ENCODE measurements at regions of chr3 and their contacts with region 1.

Region 1: GRCh38 chr3:14921078-14921616 is 26.2 kb upstream of the NR2C2 start:
- DNase-seq: peak; percentile 72 to 81
- ATAC-seq: peak; percentile 77 to 83
- H3K4me3 ChIP-seq: no peak overlapping the region
- H3K27ac ChIP-seq: no peak overlapping the region
- H3K4me1 ChIP-seq: no peaks in the 10 kb centered on the region
- H3K27me3 ChIP-seq: no peaks in the 10 kb centered on the region
- CTCF ChIP-seq: peak; percentile 95 to 99 (median 98)
- POLR2A ChIP-seq: no peak

Region 2: DNA sequence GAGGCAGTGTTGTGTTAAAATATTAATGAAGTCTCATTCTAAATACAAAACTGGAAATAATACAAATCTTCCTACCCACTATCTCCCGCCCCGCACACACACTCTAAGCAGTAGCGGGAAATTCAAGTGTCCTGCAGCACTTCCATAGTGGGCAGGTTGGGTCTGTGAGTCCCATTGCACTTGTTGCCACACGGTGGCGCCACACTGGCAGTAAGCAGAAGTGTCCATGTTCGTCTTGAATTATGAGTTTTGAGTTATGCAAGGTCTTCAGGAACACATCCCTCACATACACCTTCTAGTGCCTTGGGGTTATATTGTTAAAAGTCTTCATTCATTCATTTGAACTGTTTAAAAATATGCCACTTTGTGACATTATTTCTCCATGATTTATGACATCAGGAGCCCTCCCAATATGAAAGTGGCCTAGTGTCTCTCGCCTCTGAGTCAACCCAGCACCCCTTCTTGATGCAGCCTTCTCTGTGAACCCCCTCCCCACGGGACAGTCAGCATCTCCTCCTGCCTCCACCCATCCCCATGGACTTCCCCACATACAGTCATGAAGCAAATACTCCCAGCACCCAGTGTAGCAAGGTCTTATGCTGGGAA is 287.2 kb before region 1 on chr3:
- in situ Hi-C with region 1: no loop called
- intact Hi-C with region 1: loop called (anchors 1 kb)
- DNase-seq: no peak
- ATAC-seq: peak in 1 of 2 donors; percentile 55
- H3K4me3 ChIP-seq: no peak overlapping the region
- H3K27ac ChIP-seq: no peak overlapping the region
- H3K4me1 ChIP-seq: no peaks in the 10 kb centered on the region
- H3K27me3 ChIP-seq: peaks cover 0 to 4% (median 3%) of the 10 kb centered on the region in 3 donors
- CTCF ChIP-seq: peak; percentile 30 to 76 (median 58)
- POLR2A ChIP-seq: no peak

Region 3: DNA sequence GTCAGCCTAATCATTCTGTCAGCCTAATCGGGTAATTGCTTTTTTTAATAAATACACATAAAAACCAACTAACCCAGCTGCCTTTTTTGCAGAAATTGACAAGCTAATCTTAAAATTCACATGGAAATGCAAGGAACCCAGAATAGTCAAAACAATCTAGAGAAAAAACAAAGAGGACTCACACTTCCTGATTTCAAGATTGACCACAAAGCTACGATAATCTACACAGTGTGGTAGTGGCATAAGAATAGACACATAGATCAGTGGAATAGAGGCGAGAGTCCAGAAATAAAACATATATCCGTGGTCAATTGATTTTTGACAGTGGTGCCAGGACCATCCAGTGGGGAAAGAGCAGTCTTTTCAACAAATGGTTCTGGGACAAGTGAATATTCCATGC is 248.6 kb before region 1 on chr3:
- in situ Hi-C with region 1: loop called (anchors 5 to 25 kb)
- intact Hi-C with region 1: loop called (anchors 2 kb)
- DNase-seq: no peak
- ATAC-seq: no peak
- H3K4me3 ChIP-seq: no peak overlapping the region
- H3K27ac ChIP-seq: no peak overlapping the region
- H3K4me1 ChIP-seq: no peaks in the 10 kb centered on the region
- H3K27me3 ChIP-seq: no peaks in the 10 kb centered on the region
- CTCF ChIP-seq: no peak
- POLR2A ChIP-seq: no peak

Region 4: GRCh38 chr3:14780927-14781507 is 140.1 kb before region 1 on chr3:
- in situ Hi-C with region 1: loop called in 1 of 4 experiments (anchors 25 kb)
- intact Hi-C with region 1: no loop called
- DNase-seq: no peak
- ATAC-seq: no peak
- H3K4me3 ChIP-seq: no peak overlapping the region
- H3K27ac ChIP-seq: no peak overlapping the region
- H3K4me1 ChIP-seq: no peaks in the 10 kb centered on the region
- H3K27me3 ChIP-seq: no peaks in the 10 kb centered on the region
- CTCF ChIP-seq: peak in 2 of 5 experiments; percentile 34 to 38
- POLR2A ChIP-seq: no peak

Region 5: GRCh38 chr3:15032650-15033049 is 111.5 kb after region 1 on chr3:
- in situ Hi-C with region 1: loop called in 1 of 4 experiments (anchors 10 kb)
- intact Hi-C with region 1: no loop called
- DNase-seq: peak; percentile 18 to 58
- ATAC-seq: peak; percentile 76 to 77
- H3K4me3 ChIP-seq: no peak overlapping the region
- H3K27ac ChIP-seq: peak overlapping the region in 3 of 4 donors; percentile 38 to 69 (median 57)
- H3K4me1 ChIP-seq: peaks cover 0 to 5% of the 10 kb centered on the region in 2 donors
- H3K27me3 ChIP-seq: no peaks in the 10 kb centered on the region
- CTCF ChIP-seq: no peak
- POLR2A ChIP-seq: no peak

Region 6: DNA sequence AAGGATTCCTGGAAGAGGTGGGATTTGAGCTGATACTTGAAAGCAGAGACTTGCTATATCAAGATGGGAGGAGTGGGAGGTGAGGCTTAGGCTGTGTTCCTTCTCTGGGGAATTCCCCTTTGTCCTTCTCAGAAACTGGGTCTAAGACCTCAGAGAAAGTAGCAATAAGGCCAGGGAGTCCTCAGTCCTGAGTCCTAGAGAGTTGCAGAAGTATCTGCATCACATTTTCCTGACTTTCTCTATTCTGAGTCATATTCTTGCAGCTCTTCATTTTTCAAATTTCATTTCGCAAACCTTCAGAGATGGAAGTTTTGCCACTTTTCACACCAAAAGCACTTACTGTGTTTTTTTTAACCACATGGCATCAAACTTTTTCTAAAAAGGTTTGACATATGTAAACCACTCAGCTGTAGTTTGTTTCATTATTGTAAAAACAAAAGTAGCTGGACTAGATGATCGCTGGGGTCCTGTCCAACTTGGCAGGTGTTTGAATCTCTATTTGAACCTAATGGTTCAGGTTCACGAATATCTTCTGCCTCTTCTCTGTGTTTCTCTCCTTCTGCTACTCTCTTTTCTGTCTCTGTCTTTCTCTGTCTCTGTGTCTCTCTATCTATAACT is 579.1 kb after region 1 on chr3:
- in situ Hi-C with region 1: no loop called
- intact Hi-C with region 1: no loop called
- DNase-seq: no peak
- ATAC-seq: no peak
- H3K4me3 ChIP-seq: no peak overlapping the region
- H3K27ac ChIP-seq: peak overlapping the region; percentile 81 to 88 (median 85)
- H3K4me1 ChIP-seq: peaks cover 72% of the 10 kb centered on the region in 2 donors
- H3K27me3 ChIP-seq: no peaks in the 10 kb centered on the region
- CTCF ChIP-seq: no peak
- POLR2A ChIP-seq: no peak